Activated naive CD8-positive, alpha-beta T cell treated with anti-CD3 and anti-CD28 coated beads, Interleukin-2, amount 10 ng/mL, durations not matched to agents 7 days and 5 days (primary cell): ENCODE measurements at regions of chr17 and their contacts with region 1.

Region 1: DNA sequence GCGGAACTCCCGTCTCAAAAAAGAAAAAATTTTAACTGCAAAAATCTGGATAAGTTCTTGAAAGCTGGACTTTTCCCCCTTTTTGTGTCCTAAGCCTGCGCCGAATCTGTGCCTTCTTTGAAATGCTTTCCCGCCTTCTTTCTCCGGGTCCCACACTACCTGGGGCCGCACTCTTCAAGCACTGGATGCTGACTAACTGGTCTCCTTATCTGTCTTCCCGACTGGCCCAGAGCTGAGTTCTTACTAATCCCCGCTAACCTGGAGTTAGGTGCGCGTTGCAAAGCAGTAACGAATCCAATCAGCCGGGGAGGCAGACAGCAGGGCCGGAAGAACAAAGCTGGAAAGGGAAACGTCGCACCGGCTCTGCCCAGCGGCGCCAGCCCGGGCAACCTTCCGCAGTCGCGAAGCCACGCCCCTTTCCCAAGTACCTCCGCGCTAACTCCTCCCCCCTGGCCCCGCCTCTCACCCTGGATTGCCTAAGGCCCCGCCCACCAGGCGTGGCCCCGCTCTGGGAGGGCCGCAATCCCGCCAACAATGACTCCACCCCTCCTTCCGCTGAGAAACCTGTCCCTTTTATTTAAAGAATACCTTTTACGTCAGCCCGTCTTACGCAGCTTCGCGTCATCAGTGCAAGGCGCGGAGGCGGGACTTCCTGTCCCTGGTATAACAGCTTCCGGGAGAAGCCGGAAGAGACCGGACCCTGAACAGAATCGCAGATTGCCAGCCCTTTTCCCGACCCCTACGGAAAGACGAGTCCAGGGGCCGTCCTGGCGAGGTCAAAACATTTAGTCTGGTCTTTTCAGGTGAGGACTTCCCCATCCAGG is at the start of gene TMUB2:
- DNase-seq: peak; percentile 99
- ATAC-seq: peak; percentile 86
- H3K4me3 Mint-ChIP-seq: peak within 1 kb of the TSS; percentile 99
- H3K27ac Mint-ChIP-seq: peak within 1 kb of the TSS; percentile 99
- H3K4me1 Mint-ChIP-seq: peaks cover 31% of the 10 kb centered on the region
- H3K27me3 Mint-ChIP-seq: no peaks in the 10 kb centered on the region
- total RNA-seq, gene TMUB2: 38.3 to 42.5 TPM

Region 2: GRCh38 chr17:44123356-44124117 is 63.0 kb before region 1 on chr17 and contains the start of gene HDAC5:
- POLR2A ChIA-PET with region 1: interaction called, 17 read pairs
- DNase-seq: peak; percentile 94
- ATAC-seq: peak; percentile 94
- H3K4me3 Mint-ChIP-seq: peak within 1 kb of the TSS; percentile 94
- H3K27ac Mint-ChIP-seq: peak within 1 kb of the TSS; percentile 98
- H3K4me1 Mint-ChIP-seq: peaks cover 12% of the 10 kb centered on the region
- H3K27me3 Mint-ChIP-seq: peaks cover 8% of the 10 kb centered on the region
- total RNA-seq, gene HDAC5: 46.2 to 48.4 TPM

Region 3: DNA sequence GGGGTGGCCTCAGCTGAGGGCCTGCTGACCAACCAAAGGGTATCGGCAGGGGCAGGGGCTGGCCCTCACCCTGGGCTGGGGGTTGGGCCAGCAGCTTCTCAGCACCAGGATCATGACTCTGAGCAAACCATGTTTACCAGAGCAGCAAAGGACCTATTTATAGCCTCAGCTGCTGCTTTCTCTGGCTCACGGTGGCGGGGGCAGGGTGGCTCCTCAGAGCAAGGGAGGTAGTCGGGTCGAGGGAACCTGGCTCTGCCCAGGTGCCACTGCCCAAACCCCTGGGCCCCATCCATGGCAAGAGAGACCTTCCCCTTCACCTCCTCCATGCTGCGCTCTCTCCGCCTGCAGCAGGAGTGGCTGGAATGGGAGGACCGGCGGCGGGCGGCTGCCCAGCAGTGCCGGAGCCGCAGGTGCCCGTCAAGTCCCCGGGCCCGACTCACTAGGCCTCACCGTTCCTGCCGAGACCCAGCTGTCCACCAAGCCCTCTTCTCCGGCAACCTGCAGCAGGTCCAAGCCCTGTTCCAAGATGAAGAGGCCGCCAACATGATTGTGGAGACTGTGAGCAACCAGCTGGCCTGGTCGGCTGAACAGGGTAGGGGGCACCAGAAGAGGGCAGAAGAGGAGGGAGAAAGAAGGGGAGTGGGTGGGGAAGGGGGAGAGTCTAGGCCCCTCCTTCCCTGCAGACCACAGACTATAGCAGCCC is 15.9 kb before region 1 on chr17 and contains the start of gene ASB16:
- POLR2A ChIA-PET with region 1: interaction called, 27 read pairs
- DNase-seq: no peak
- ATAC-seq: no peak
- H3K4me3 Mint-ChIP-seq: no peak within 1 kb of the TSS
- H3K27ac Mint-ChIP-seq: no peak within 1 kb of the TSS
- H3K4me1 Mint-ChIP-seq: no peaks in the 10 kb centered on the region
- H3K27me3 Mint-ChIP-seq: no peaks in the 10 kb centered on the region
- total RNA-seq, gene ASB16: 0.19 to 0.51 TPM

Region 4: GRCh38 chr17:44199553-44200477 is 13.3 kb after region 1 on chr17 and contains the start of gene ATXN7L3:
- POLR2A ChIA-PET with region 1: interaction called, 56 read pairs
- DNase-seq: peak; percentile 98
- ATAC-seq: peak; percentile 71
- H3K4me3 Mint-ChIP-seq: peak within 1 kb of the TSS; percentile 95
- H3K27ac Mint-ChIP-seq: peak within 1 kb of the TSS; percentile 97
- H3K4me1 Mint-ChIP-seq: peaks cover 45% of the 10 kb centered on the region
- H3K27me3 Mint-ChIP-seq: no peaks in the 10 kb centered on the region
- total RNA-seq, gene ATXN7L3: 116 TPM

Region 5: DNA sequence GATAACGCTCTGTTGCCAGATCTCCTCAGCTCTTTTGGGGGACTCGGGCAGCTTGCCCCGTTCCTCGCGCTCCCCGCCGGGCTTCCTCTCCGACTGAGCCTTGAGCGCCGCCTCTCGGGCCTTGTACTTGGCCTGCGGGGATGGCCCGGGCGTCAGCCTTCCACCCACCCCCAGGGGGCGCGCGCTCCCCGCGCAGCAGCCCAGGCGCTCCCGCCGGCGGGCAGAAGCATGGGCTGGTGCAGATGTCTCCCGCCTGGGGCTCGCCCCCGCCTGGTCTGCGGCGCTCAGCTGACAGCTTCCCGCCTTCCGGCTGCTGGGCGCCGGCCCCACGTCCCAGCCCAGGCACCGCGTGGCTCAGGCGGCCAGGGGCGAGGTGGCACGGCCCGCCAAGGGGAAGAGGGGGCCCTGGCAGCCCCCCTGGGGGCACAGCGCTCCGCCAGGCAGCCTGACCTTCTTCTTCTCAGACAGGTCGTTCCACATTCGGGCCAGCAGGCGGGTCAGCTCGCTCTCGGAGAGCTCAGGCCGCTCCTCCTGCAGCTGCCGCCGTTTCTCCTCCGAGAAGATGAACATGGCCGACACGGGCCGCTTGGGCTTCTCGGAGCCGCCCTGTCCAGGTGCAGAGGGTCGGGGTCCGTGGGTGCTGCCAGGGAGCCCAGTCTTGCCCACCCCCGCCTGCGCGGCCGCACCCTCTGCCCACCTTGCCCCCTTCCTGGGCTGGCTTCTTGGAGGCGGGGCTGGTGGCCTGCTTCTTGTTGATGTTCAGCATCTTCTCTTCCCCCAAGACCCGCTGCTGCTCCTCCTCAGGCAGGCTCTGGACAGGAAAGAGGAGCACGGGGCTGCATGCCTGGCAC is 24.0 kb after region 1 on chr17:
- POLR2A ChIA-PET with region 1: interaction called, 11 read pairs
- DNase-seq: peak; percentile 99
- ATAC-seq: peak; percentile 97
- H3K4me3 Mint-ChIP-seq: peak overlapping the region; percentile 76
- H3K27ac Mint-ChIP-seq: peak overlapping the region; percentile 80
- H3K4me1 Mint-ChIP-seq: peaks cover 39% of the 10 kb centered on the region
- H3K27me3 Mint-ChIP-seq: no peaks in the 10 kb centered on the region